ENCODE measurements at regions of chr3 and their contacts with region 1.

Region 1: GRCh38 chr3:149512209-149512782 is 37.8 kb downstream of the TM4SF4 start:
- DNase-seq: peak; percentile 29 to 56
- ATAC-seq: peak; percentile 50 to 67 (median 65)
- H3K4me3 ChIP-seq: no peak overlapping the region
- H3K4me3 Mint-ChIP-seq: no peak overlapping the region
- H3K27ac ChIP-seq: no peak overlapping the region
- H3K27ac Mint-ChIP-seq: no peak overlapping the region
- H3K4me1 ChIP-seq: peaks cover 15% of the 10 kb centered on the region
- H3K4me1 Mint-ChIP-seq: peaks cover 19% of the 10 kb centered on the region in 2 donors
- H3K27me3 ChIP-seq: peaks cover 9% of the 10 kb centered on the region
- H3K27me3 Mint-ChIP-seq: peaks cover 16 to 20% of the 10 kb centered on the region in 2 donors
- CTCF ChIP-seq: peak; percentile 83

Region 2: GRCh38 chr3:148924562-148924961 is 587.7 kb before region 1 on chr3:
- intact Hi-C with region 1: no loop called
- DNase-seq: no peak
- ATAC-seq: no peak
- H3K4me3 ChIP-seq: no peak overlapping the region
- H3K4me3 Mint-ChIP-seq: no peak overlapping the region
- H3K27ac ChIP-seq: no peak overlapping the region
- H3K27ac Mint-ChIP-seq: no peak overlapping the region
- H3K4me1 ChIP-seq: no peaks in the 10 kb centered on the region
- H3K4me1 Mint-ChIP-seq: no peaks in the 10 kb centered on the region
- H3K27me3 ChIP-seq: no peaks in the 10 kb centered on the region
- H3K27me3 Mint-ChIP-seq: peaks cover 8 to 46% of the 10 kb centered on the region in 2 donors
- CTCF ChIP-seq: no peak

Region 3: DNA sequence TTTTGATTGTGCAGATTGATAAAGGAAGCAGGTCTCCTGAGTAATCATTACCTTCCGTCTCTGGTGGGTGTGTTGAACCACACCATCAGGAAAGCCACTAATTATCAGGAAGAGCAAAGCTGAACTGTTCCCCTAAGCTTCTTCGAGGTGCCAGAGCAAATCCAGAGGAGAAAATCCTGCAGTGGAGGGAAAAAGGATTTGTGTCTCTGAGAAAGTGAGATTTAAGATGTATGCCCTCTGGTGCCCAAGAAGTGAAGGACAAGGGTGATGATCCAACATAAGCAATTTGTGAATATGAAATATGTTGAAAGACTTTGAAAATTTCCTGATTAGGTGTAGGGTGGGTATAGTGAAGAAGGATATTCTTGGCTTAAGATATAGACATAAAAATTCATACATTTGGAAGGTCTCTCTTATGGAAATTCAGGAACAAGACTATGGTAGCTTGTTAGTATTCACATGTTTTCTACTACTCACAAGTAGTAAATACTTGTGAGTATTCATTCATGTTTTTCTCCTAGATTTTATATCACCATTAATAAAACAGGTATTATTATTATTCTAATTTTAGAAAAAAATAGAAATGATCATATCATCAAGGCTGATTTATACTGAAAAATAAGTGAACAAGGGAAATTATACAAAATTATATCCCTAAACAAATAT is 205.2 kb after region 1 on chr3:
- intact Hi-C with region 1: loop called (anchors 1 kb)
- DNase-seq: peak in 1 of 2 donors; percentile 52
- ATAC-seq: no peak
- H3K4me3 ChIP-seq: no peak overlapping the region
- H3K4me3 Mint-ChIP-seq: no peak overlapping the region
- H3K27ac ChIP-seq: no peak overlapping the region
- H3K27ac Mint-ChIP-seq: no peak overlapping the region
- H3K4me1 ChIP-seq: no peaks in the 10 kb centered on the region
- H3K4me1 Mint-ChIP-seq: no peaks in the 10 kb centered on the region
- H3K27me3 ChIP-seq: no peaks in the 10 kb centered on the region
- H3K27me3 Mint-ChIP-seq: peaks cover 4 to 18% of the 10 kb centered on the region in 2 donors
- CTCF ChIP-seq: peak; percentile 65

Region 4: DNA sequence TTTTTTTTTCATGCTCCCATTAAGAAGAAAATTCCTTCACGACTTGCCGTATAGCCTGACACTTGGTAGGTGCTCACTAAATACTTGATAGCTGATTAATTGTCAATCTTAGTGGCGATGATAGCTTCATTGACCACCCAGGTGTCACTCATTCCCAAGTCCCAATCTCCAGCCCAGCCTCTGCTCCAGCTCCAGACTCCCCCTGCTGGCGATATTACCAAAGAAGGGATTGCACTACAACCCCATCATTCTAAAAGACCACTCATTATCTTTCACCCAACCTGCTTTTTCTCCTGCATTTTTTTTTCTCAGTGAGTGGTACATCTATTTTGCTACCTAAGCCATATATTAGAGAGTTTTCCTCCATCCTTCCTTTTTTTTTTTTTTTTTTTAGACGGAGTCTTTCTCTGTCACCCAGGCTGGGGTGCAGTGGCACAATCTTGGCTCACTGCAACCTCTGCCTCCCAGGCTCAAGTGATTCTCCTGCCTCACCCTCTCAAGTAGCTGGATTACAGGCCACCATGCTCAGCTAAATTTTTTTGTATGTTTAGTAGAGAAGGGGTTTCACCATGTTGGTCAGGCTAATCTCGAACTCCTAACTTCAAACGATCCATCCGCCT is 259.5 kb after region 1 on chr3:
- intact Hi-C with region 1: loop called (anchors 2 kb)
- DNase-seq: peak in 1 of 2 donors; percentile 60
- ATAC-seq: peak in 2 of 3 donors; percentile 49 to 61
- H3K4me3 ChIP-seq: no peak overlapping the region
- H3K4me3 Mint-ChIP-seq: no peak overlapping the region
- H3K27ac ChIP-seq: no peak overlapping the region
- H3K27ac Mint-ChIP-seq: no peak overlapping the region
- H3K4me1 ChIP-seq: no peaks in the 10 kb centered on the region
- H3K4me1 Mint-ChIP-seq: no peaks in the 10 kb centered on the region
- H3K27me3 ChIP-seq: no peaks in the 10 kb centered on the region
- H3K27me3 Mint-ChIP-seq: peaks cover 9 to 19% of the 10 kb centered on the region in 2 donors
- CTCF ChIP-seq: peak; percentile 60

Region 5: GRCh38 chr3:149812606-149813366 is 300.5 kb after region 1 on chr3 and contains the start of gene RNF13:
- intact Hi-C with region 1: loop called (anchors 5 kb)
- DNase-seq: peak; percentile 93 to 95
- ATAC-seq: peak; percentile 93 to 98 (median 95)
- H3K4me3 ChIP-seq: peak within 1 kb of the TSS; percentile 83
- H3K4me3 Mint-ChIP-seq: peak within 1 kb of the TSS; percentile 96
- H3K27ac ChIP-seq: peak within 1 kb of the TSS; percentile 99
- H3K27ac Mint-ChIP-seq: peak within 1 kb of the TSS; percentile 96 to 98
- H3K4me1 ChIP-seq: peaks cover 13% of the 10 kb centered on the region
- H3K4me1 Mint-ChIP-seq: peaks cover 53% of the 10 kb centered on the region in 2 donors
- H3K27me3 ChIP-seq: no peaks in the 10 kb centered on the region
- H3K27me3 Mint-ChIP-seq: peaks cover 6 to 12% of the 10 kb centered on the region in 2 donors
- CTCF ChIP-seq: no peak
- total RNA-seq, gene RNF13: 57.4 to 69.7 (median 66.6) TPM

Measured in natural killer cell (primary cell).